ENCODE measurements at regions of chr9 and their contacts with region 1.

Region 1: GRCh38 chr9:123434619-123435528 is 78.9 kb downstream of the CRB2 start:
- DNase-seq: peak; percentile 33 to 67
- H3K4me3 ChIP-seq: no peak overlapping the region
- H3K27ac ChIP-seq: no peak overlapping the region
- H3K4me1 ChIP-seq: peaks cover 0 to 8% (median 2%) of the 10 kb centered on the region in 4 experiments; a peak in 4 of 7 replicates
- H3K27me3 ChIP-seq: no peaks in the 10 kb centered on the region; a peak in 1 of 7 replicates
- CTCF ChIP-seq: peak; percentile 57 to 70 (median 67)
- EP300 ChIP-seq: no peak
- POLR2A ChIP-seq: no peak
- RAD21 ChIP-seq: peak; percentile 51 to 60

Region 2: DNA sequence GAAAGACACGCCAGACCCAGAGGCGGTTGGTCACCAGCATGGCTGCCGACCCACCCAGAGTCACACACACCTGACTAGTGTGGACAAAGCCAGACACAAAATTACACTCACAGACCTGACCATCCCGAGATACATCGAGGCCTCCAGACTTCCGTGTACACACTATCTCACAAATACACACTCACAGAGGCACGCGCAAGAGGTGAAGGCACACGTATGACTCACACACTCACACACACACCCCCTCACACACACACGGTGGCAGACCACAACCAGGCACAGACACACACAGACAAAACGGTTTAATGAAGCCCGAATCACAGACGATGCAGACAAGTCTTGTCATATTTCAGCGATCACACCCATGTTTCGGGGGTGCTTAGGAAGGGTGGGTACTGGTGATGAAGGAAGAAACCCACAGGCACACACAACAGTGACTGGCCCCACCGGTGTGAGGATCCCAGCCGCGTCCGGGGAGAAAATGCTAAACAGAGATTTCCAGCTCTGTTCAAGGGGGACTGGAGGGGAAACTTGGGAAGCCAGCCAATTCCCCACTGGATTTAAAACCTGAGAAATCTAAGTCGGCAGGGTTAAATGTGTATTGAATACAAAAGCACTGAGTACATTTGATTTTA is 27.5 kb before region 1 on chr9:
- CTCF ChIA-PET with region 1: interaction called, 11 read pairs
- POLR2A ChIA-PET with region 1: interaction called, 5 read pairs
- DNase-seq: no peak
- H3K4me3 ChIP-seq: no peak overlapping the region
- H3K27ac ChIP-seq: no peak overlapping the region
- H3K4me1 ChIP-seq: peaks cover 0 to 14% (median 9%) of the 10 kb centered on the region in 4 experiments; a peak in 6 of 7 replicates
- H3K27me3 ChIP-seq: no peaks in the 10 kb centered on the region
- CTCF ChIP-seq: no peak
- EP300 ChIP-seq: no peak
- POLR2A ChIP-seq: no peak
- RAD21 ChIP-seq: no peak

Region 3: DNA sequence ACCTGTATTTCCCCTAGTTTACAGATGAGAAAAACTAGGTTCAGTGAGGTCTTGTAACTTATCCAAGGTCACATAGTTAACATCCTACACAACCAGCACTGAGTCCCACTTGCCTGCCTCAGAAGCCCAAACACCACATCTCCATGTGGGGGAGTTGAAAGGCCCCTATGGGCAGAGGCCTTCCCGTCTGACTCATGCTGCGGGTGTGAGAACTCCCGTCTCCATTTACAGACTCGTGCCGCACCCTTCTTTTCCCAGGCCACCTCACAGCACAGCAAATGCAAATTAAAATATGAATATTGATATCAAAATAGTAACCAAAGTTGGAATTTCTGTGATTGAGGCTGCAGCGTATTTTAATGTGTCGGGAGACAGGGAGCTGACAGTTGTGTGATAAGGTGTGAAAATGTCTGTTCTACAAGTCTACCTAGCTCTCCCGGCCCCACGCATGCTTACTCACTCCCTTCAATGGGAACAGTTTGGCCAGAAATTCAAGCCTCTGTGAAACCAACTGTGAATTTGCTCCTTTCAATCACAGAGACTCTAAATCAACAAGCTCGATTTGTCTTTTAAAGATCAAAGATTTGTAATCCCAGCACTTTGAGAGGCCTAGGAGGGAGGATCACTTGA is 11.2 kb after region 1 on chr9:
- CTCF ChIA-PET with region 1: interaction called, 20 read pairs
- POLR2A ChIA-PET with region 1: interaction called, 3 read pairs
- DNase-seq: no peak
- H3K4me3 ChIP-seq: no peak overlapping the region
- H3K27ac ChIP-seq: no peak overlapping the region
- H3K4me1 ChIP-seq: peaks cover 0 to 2% (median 0%) of the 10 kb centered on the region in 4 experiments; a peak in 2 of 7 replicates
- H3K27me3 ChIP-seq: no peaks in the 10 kb centered on the region
- CTCF ChIP-seq: no peak
- EP300 ChIP-seq: no peak
- POLR2A ChIP-seq: no peak
- RAD21 ChIP-seq: no peak

Measured in H1 (cell line).